MCF 10A (cell line): ENCODE measurements at regions of chr3 and their contacts with region 1.

Region 1: GRCh38 chr3:35921706-35922105 is 282.4 kb downstream of the ARPP21 start:
- DNase-seq: no peak
- H3K4me3 Mint-ChIP-seq: no peak overlapping the region
- H3K27ac Mint-ChIP-seq: no peak overlapping the region
- H3K4me1 Mint-ChIP-seq: no peaks in the 10 kb centered on the region
- H3K27me3 Mint-ChIP-seq: peaks cover 40% of the 10 kb centered on the region
- CTCF ChIP-seq: no peak

Region 2: GRCh38 chr3:35932995-35933394 is 11.3 kb after region 1 on chr3:
- CTCF ChIA-PET with region 1: interaction called, 11 read pairs
- POLR2A ChIA-PET with region 1: no interaction called
- intact Hi-C with region 1: no loop called
- DNase-seq: peak; percentile 65
- H3K4me3 Mint-ChIP-seq: no peak overlapping the region
- H3K27ac Mint-ChIP-seq: no peak overlapping the region
- H3K4me1 Mint-ChIP-seq: no peaks in the 10 kb centered on the region
- H3K27me3 Mint-ChIP-seq: peaks cover 42% of the 10 kb centered on the region
- CTCF ChIP-seq: no peak